AG04450 (cell line): ENCODE measurements at regions of chr2 and their contacts with region 1.

Region 1: GRCh38 chr2:189096769-189097447 is 82.7 kb downstream of the COL5A2 start:
- DNase-seq: peak; percentile 71
- H3K4me3 ChIP-seq: no peak overlapping the region
- H3K27ac ChIP-seq: peak overlapping the region; percentile 65
- H3K27me3 ChIP-seq: no peaks in the 10 kb centered on the region
- CTCF ChIP-seq: no peak

Region 2: GRCh38 chr2:187815113-187815512 is 1281.8 kb before region 1 on chr2:
- CTCF ChIA-PET with region 1: interaction called, 10 read pairs
- POLR2A ChIA-PET with region 1: no interaction called
- DNase-seq: no peak
- H3K4me3 ChIP-seq: no peak overlapping the region
- H3K27ac ChIP-seq: no peak overlapping the region
- H3K27me3 ChIP-seq: no peaks in the 10 kb centered on the region
- CTCF ChIP-seq: no peak

Region 3: GRCh38 chr2:188937228-188938220 is 159.4 kb before region 1 on chr2:
- CTCF ChIA-PET with region 1: no interaction called
- POLR2A ChIA-PET with region 1: no interaction called
- DNase-seq: peak; percentile 27
- H3K4me3 ChIP-seq: no peak overlapping the region
- H3K27ac ChIP-seq: no peak overlapping the region
- H3K27me3 ChIP-seq: no peaks in the 10 kb centered on the region
- CTCF ChIP-seq: no peak

Region 4: GRCh38 chr2:189082376-189082975 is 14.4 kb before region 1 on chr2:
- CTCF ChIA-PET with region 1: interaction called, 12 read pairs
- POLR2A ChIA-PET with region 1: interaction called, 3 read pairs
- DNase-seq: no peak
- H3K4me3 ChIP-seq: no peak overlapping the region
- H3K27ac ChIP-seq: peak overlapping the region; percentile 49
- H3K27me3 ChIP-seq: no peaks in the 10 kb centered on the region
- CTCF ChIP-seq: no peak

Region 5: DNA sequence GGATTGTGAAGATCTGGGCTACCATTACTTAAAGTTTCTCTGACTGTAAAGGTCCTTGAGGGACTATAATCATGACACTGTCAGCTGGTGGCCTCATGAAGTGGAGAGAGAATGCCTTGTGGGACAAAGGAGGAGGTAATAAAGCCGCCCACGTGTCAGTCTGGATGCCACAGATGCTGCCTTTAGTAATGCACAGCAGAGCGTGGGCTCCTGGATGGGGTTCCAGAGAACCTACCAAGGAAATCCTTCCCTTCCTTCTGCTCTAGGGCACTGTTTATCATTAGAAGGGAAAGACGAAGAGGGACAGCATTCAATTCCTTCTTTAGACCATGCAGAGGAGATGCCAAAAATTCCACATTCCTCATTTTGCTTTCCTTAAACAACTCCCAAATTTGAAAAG is 19.2 kb after region 1 on chr2:
- CTCF ChIA-PET with region 1: interaction called, 10 read pairs
- POLR2A ChIA-PET with region 1: no interaction called
- DNase-seq: no peak
- H3K4me3 ChIP-seq: no peak overlapping the region
- H3K27ac ChIP-seq: no peak overlapping the region
- H3K27me3 ChIP-seq: no peaks in the 10 kb centered on the region
- CTCF ChIP-seq: no peak

Region 6: GRCh38 chr2:189179570-189179950 is 82.7 kb after region 1 on chr2 and contains the start of gene COL5A2:
- CTCF ChIA-PET with region 1: interaction called, 25 read pairs
- POLR2A ChIA-PET with region 1: interaction called, 3 read pairs
- DNase-seq: peak; percentile 77
- H3K4me3 ChIP-seq: peak within 1 kb of the TSS; percentile 75
- H3K27ac ChIP-seq: peak within 1 kb of the TSS; percentile 82
- H3K27me3 ChIP-seq: no peaks in the 10 kb centered on the region
- CTCF ChIP-seq: no peak
- polyA plus RNA-seq, gene COL5A2: 269 and 305 TPM in 2 replicates

Region 7: DNA sequence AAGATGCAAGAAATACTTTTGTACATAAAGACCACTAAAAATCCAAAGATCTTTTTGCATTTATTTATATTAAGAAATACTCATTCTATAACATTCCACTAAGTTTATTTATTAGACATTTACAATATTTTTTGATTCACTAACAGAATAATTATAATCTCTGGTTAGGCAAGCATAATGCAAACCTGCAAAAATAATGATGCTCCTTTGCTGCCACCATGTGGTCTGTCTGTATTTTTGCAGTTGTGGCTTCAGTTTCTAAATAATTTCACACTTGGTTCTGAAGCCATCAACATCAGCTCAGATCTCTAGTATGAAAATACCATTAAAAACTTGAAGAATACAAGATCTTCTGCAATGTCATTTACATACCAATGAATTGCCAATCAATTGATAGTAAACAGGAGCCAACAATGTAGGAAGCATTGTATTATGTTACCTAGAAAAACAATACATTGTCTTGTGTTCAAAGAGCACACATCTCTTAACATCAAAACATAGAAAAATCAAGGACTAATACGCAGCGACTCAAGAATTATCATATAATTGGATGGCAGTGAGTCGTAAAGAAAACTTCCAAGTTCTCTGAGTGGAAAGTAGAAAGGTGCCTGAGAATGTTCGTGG is 315.5 kb after region 1 on chr2:
- CTCF ChIA-PET with region 1: interaction called, 26 read pairs
- POLR2A ChIA-PET with region 1: no interaction called
- DNase-seq: peak; percentile 48
- H3K4me3 ChIP-seq: peak overlapping the region; percentile 23; the same call in 1 of the 2 replicates
- H3K27ac ChIP-seq: no peak overlapping the region
- H3K27me3 ChIP-seq: no peaks in the 10 kb centered on the region
- CTCF ChIP-seq: peak; percentile 67